BJ (cell line): ENCODE measurements at regions of chr17 and their contacts with region 1.

Region 1: GRCh38 chr17:56819431-56820145 is 14.1 kb downstream of the C17orf67 start:
- DNase-seq: peak; percentile 10
- H3K4me3 ChIP-seq: no peak overlapping the region
- H3K27me3 ChIP-seq: no peaks in the 10 kb centered on the region
- CTCF ChIP-seq: peak; percentile 77

Region 2: DNA sequence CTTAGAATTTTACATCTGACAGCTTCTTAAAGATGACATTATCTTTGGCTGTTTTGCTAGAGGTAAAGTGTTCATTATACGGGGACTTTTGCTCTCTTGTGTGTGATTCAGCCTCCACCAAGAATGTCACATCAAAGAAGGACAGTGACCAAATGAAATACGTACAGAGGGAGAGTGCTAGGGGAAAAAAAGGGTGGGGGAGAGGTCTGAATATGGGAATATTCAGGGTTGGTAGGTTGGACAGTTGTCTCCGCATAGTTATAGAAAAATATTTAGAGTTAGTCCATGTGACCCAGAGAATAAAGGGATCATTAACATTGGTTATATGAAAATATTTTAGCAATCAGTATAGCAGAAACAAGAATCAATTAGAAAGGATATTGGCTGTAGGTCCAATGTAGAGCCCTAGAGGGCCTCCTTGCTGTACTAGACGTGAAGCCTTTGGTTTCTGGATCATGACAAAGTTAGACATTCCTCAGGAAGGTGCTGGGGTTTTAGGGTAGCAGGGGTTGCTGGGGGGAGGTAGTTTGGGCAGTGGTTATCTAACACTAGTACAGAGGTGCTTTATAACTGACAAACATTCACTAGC is 698.1 kb before region 1 on chr17:
- CTCF ChIA-PET with region 1: no interaction called
- POLR2A ChIA-PET with region 1: no interaction called
- DNase-seq: no peak
- H3K4me3 ChIP-seq: no peak overlapping the region
- H3K27me3 ChIP-seq: no peaks in the 10 kb centered on the region
- CTCF ChIP-seq: peak; percentile 34

Region 3: DNA sequence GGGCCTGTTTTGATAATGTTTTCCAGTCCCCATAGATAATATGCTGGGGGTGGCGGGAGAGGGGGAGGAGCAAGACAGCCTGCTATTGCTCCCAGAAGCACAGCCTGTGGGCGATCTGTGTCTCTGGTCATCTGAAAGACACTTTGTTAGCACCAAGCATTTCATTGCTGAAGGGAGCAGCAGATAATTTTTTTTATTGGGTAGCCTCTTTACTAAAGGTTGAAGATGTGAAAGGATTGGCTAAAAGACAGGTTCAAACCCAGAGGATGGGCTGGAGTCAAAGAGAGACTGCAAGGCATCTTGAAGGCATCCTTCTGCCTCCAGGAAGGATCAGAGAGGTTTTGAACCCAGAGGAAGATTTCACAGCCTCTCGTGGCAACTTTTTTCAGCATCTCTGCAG is 46.5 kb before region 1 on chr17:
- CTCF ChIA-PET with region 1: no interaction called
- POLR2A ChIA-PET with region 1: no interaction called
- DNase-seq: no peak
- H3K4me3 ChIP-seq: no peak overlapping the region
- H3K27me3 ChIP-seq: no peaks in the 10 kb centered on the region; the same call in 1 of the 2 replicates
- CTCF ChIP-seq: no peak

Region 4: DNA sequence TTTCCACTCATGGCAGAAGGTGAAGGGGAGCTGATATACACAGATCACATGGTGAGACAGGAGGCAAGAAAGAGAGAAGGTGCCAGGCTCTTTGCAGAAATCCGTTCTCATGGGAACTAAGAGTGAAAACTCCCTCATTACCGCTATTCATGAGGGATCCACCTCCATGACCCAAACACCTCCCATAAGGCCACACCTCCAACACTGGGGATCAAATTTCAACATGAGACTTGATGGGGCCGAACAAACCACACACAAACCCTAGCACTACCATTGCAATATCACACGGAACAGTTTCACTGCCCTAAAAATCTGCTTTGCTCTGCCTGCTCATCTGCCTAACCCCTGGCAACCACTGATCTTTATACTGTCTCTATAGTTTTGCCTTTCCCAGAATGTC is 20.7 kb before region 1 on chr17:
- CTCF ChIA-PET with region 1: interaction called, 20 read pairs
- POLR2A ChIA-PET with region 1: no interaction called
- DNase-seq: no peak
- H3K4me3 ChIP-seq: no peak overlapping the region
- H3K27me3 ChIP-seq: peaks cover 4% of the 10 kb centered on the region; the same call in 1 of the 2 replicates
- CTCF ChIP-seq: no peak

Region 5: DNA sequence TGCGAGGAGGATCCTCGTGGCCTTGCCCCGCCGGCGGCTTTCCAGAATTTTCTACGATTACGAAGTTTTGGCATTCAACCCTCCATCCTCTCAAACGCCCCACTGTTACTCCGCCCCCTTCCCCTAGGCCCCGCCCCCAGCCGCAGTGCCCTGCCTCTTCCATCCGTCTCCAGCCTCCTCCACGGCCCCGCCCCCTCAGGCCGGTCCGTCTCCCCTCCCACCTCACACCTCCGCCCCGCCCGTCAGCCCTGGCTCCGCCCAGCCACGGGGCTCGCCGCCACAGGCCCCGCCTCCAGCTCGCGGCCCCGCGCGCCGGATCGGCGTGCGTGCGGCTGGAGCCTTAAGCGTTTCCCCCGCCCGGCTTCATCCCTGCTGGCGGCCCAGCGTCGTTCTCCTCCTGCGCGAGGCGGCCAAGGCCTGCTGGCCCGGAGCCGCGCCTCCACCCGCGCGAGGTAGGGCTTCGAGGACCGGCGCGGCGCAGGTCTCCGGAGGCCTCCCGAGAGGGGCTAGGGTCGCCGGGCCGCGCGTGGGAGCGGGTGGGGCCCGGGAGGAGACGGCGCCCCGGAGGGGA is 14.3 kb after region 1 on chr17 and contains the starts of genes C17orf67 and DGKE:
- CTCF ChIA-PET with region 1: interaction called, 17 read pairs
- POLR2A ChIA-PET with region 1: no interaction called
- DNase-seq: peak; percentile 69
- H3K4me3 ChIP-seq: peak within 1 kb of the TSS; percentile 86
- H3K27me3 ChIP-seq: no peaks in the 10 kb centered on the region
- CTCF ChIP-seq: no peak
- polyA plus RNA-seq, gene C17orf67: 0.49 and 0.50 TPM in 2 replicates
- polyA plus RNA-seq, gene DGKE: 1.9 and 2.1 TPM in 2 replicates

Region 6: DNA sequence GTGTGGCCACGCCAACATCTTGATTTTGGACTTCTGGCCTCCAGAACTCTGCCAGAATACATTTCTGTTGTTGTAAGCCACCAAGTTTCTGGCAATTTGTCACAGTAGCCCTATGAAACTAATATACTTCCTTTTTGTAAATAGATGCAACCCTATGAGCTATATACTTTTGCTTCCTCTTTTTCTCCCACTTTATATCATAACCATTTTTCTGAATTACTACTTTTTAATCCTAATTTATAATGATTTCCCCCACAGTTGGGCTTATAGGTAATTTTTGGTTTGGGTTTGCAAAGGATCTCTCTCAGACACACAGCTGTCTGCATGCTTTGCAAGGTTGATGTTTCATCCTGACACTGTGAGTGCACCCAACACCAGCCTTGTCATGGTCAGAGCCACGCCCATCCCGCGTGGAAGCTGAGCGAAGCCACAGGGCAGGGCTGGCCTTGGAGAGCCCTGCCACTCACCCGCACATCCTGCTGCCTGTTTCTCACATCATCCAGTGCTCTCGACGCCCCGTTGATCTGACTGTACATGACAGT is 88.5 kb after region 1 on chr17:
- CTCF ChIA-PET with region 1: no interaction called
- POLR2A ChIA-PET with region 1: no interaction called
- DNase-seq: no peak
- H3K4me3 ChIP-seq: no peak overlapping the region
- H3K27me3 ChIP-seq: no peaks in the 10 kb centered on the region
- CTCF ChIP-seq: no peak

Region 7: DNA sequence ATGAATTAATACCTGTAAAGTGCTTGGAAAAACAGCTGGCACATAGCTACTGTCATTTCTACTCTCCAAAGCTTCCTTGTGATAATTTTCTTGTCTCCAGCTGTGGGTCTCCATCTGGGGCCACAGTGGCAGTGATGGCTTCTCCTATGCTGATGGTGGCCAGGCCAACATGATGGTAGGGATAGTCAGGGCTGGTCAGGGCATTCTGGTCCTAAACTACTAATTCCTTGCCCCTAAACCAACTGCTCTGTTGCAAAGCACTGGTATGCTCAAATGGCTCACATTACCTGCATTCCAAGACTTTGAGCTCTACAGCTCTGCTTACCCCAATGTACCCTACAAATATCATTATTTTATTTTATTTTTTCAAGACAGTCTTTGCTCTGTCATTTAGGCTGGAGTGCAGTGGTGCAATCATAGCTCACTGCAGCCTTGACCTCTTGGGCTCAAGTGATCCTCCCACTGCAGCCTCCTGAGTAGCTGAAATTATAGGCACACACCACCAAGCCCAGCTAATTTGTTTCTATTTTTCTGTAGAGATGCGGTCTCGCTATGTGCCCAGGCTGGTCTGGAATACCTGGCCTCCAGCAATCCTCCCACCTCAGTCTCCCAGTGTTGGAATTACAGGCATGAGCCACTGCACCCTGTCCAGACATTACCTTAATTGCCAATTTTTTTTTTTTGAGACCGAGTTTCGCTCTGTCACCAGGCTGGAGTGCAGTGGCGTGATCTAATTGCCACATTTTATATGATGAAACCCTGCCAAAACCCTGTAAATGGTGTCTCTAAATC is 113.3 kb after region 1 on chr17:
- CTCF ChIA-PET with region 1: interaction called, 14 read pairs
- POLR2A ChIA-PET with region 1: no interaction called
- DNase-seq: no peak
- H3K4me3 ChIP-seq: no peak overlapping the region
- H3K27me3 ChIP-seq: no peaks in the 10 kb centered on the region
- CTCF ChIP-seq: no peak

Region 8: GRCh38 chr17:56939901-56940343 is 120.3 kb after region 1 on chr17:
- CTCF ChIA-PET with region 1: interaction called, 105 read pairs
- POLR2A ChIA-PET with region 1: no interaction called
- DNase-seq: no peak
- H3K4me3 ChIP-seq: no peak overlapping the region
- H3K27me3 ChIP-seq: no peaks in the 10 kb centered on the region
- CTCF ChIP-seq: peak; percentile 67

Region 9: GRCh38 chr17:57035971-57036481 is 216.4 kb after region 1 on chr17:
- CTCF ChIA-PET with region 1: no interaction called
- POLR2A ChIA-PET with region 1: no interaction called
- DNase-seq: no peak
- H3K4me3 ChIP-seq: no peak overlapping the region
- H3K27me3 ChIP-seq: peaks cover 4% of the 10 kb centered on the region
- CTCF ChIP-seq: no peak